B cell (primary cell): ENCODE measurements at regions of chr6 and their contacts with region 1.

Region 1: GRCh38 chr6:38477680-38478260 is 162.0 kb downstream of the BTBD9 start:
- DNase-seq: no peak
- ATAC-seq: no peak
- H3K4me3 ChIP-seq: no peak overlapping the region
- H3K4me3 Mint-ChIP-seq: no peak overlapping the region
- H3K27ac ChIP-seq: no peak overlapping the region
- H3K27ac Mint-ChIP-seq: no peak overlapping the region
- H3K4me1 ChIP-seq: peaks cover 4 to 7% of the 10 kb centered on the region in 2 donors
- H3K4me1 Mint-ChIP-seq: no peaks in the 10 kb centered on the region
- H3K27me3 ChIP-seq: no peaks in the 10 kb centered on the region
- H3K27me3 Mint-ChIP-seq: no peaks in the 10 kb centered on the region
- CTCF ChIP-seq: no peak

Region 2: GRCh38 chr6:38220069-38220723 is 257.6 kb before region 1 on chr6:
- CTCF ChIA-PET with region 1: no interaction called
- POLR2A ChIA-PET with region 1: no interaction called
- intact Hi-C with region 1: no loop called
- DNase-seq: no peak
- ATAC-seq: no peak
- H3K4me3 ChIP-seq: no peak overlapping the region
- H3K4me3 Mint-ChIP-seq: no peak overlapping the region
- H3K27ac ChIP-seq: no peak overlapping the region
- H3K27ac Mint-ChIP-seq: no peak overlapping the region
- H3K4me1 ChIP-seq: no peaks in the 10 kb centered on the region
- H3K4me1 Mint-ChIP-seq: no peaks in the 10 kb centered on the region
- H3K27me3 ChIP-seq: no peaks in the 10 kb centered on the region
- H3K27me3 Mint-ChIP-seq: no peaks in the 10 kb centered on the region
- CTCF ChIP-seq: no peak

Region 3: DNA sequence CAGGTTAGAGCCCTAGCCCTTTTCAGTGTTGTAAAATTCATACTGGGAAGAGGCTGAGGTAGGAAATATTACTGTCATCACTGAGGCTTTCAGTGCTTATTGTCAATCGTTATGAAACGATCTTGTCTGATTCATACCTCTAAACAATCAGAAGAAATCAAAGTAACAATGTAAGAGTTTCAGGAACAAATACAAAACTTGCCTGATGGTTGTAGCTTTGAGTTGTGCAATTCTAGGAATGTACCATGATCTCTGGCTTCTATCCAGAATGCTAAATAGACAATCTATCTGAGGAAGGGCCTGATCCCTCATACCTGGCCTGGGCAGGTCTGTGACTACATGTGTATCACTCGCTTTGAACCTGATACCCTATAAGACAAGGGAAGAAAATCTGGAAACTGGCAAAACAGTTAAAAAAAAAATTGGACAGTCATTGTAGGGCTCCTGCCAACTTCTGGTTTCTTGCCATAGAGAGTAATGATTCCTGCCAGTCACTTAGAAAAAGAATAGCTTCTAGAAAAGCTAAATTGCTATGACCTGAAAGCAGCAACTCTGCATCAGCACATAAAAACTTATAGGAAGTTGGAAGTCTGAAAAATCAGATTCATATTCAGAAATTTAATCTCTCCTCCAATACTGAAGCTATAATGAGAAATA is 72.7 kb before region 1 on chr6:
- CTCF ChIA-PET with region 1: no interaction called
- POLR2A ChIA-PET with region 1: no interaction called
- intact Hi-C with region 1: loop called (anchors 10 kb)
- DNase-seq: no peak
- ATAC-seq: no peak
- H3K4me3 ChIP-seq: no peak overlapping the region
- H3K4me3 Mint-ChIP-seq: no peak overlapping the region
- H3K27ac ChIP-seq: no peak overlapping the region
- H3K27ac Mint-ChIP-seq: peak overlapping the region; percentile 16
- H3K4me1 ChIP-seq: peaks cover 4 to 8% of the 10 kb centered on the region in 2 donors
- H3K4me1 Mint-ChIP-seq: peaks cover 32% of the 10 kb centered on the region
- H3K27me3 ChIP-seq: no peaks in the 10 kb centered on the region
- H3K27me3 Mint-ChIP-seq: no peaks in the 10 kb centered on the region
- CTCF ChIP-seq: no peak

Region 4: GRCh38 chr6:38443352-38444146 is 34.2 kb before region 1 on chr6:
- CTCF ChIA-PET with region 1: no interaction called
- POLR2A ChIA-PET with region 1: no interaction called
- intact Hi-C with region 1: no loop called
- DNase-seq: peak; percentile 14
- ATAC-seq: no peak
- H3K4me3 ChIP-seq: no peak overlapping the region
- H3K4me3 Mint-ChIP-seq: no peak overlapping the region
- H3K27ac ChIP-seq: no peak overlapping the region
- H3K27ac Mint-ChIP-seq: no peak overlapping the region
- H3K4me1 ChIP-seq: peaks cover 7 to 10% of the 10 kb centered on the region in 2 donors
- H3K4me1 Mint-ChIP-seq: peaks cover 9% of the 10 kb centered on the region
- H3K27me3 ChIP-seq: no peaks in the 10 kb centered on the region
- H3K27me3 Mint-ChIP-seq: no peaks in the 10 kb centered on the region
- CTCF ChIP-seq: no peak